ENCODE measurements at regions of chr22 and their contacts with region 1.

Region 1: GRCh38 chr22:25546751-25547150 is 17.7 kb upstream of the GRK3 start:
- DNase-seq: no peak
- ATAC-seq: no peak
- H3K4me3 Mint-ChIP-seq: no peak overlapping the region
- H3K27ac Mint-ChIP-seq: no peak overlapping the region
- H3K4me1 Mint-ChIP-seq: peaks cover 53% of the 10 kb centered on the region
- H3K27me3 Mint-ChIP-seq: no peaks in the 10 kb centered on the region

Region 2: GRCh38 chr22:25536589-25536988 is 10.2 kb before region 1 on chr22:
- CTCF ChIA-PET with region 1: no interaction called
- DNase-seq: no peak
- ATAC-seq: no peak
- H3K4me3 Mint-ChIP-seq: no peak overlapping the region
- H3K27ac Mint-ChIP-seq: no peak overlapping the region
- H3K4me1 Mint-ChIP-seq: peaks cover 2% of the 10 kb centered on the region
- H3K27me3 Mint-ChIP-seq: peaks cover 5% of the 10 kb centered on the region

Region 3: DNA sequence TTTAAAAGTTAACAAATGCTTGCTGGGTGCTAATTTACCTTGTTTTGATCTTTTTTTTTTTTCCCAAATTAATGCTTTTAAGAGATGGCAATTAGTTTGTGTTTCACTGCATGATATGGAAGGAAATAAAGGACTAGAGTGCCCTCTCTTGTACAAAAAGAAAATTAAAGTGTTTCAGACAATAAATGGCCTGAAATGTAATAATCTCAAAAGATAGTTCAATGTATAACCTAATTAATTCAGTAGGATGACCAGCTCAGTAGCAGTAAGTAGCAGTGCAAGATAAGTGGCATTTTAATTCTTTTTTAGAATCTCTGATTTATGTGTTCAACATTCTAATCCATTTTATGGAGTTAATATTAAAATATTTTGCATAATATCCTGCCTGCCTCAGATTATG is 155.3 kb after region 1 on chr22:
- CTCF ChIA-PET with region 1: interaction called, 12 read pairs
- DNase-seq: no peak
- ATAC-seq: no peak
- H3K4me3 Mint-ChIP-seq: peak overlapping the region; percentile 44
- H3K27ac Mint-ChIP-seq: peak overlapping the region; percentile 70
- H3K4me1 Mint-ChIP-seq: peaks cover 44% of the 10 kb centered on the region
- H3K27me3 Mint-ChIP-seq: no peaks in the 10 kb centered on the region